Heart left ventricle (tissue), 16 donors: ENCODE measurements at regions of chr6 and their contacts with region 1.

Region 1: DNA sequence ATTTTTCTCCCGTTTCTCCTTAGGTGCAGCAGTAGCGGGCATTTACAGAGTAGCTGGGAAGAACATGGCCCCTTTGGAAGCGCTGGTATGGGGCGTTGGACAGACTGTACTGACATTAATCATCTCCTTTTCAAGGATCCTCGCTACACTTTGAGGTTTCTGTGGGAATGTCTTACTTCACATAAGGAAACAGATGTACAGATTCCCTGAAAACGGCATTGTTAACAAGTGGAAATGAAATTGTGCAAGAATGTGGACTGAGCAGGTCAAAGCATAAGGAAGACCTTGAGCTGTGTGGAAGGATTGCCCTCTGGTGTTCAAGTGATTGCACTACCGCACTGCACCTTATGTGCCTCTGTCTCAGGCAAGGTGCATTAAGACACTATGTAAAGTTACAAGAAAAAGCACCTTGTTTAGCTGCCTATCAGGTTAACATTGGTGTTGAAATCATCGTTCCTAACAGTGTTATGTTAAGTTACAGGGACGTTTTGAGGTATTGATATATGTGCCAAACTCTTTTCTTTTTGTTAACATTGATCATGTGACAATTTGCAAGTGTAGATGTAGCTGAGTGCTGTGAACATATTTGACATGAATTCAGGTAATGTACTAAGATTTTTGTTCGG is 38.0 kb downstream of the TMEM170B start:
- DNase-seq: peak in 4 of 5 donors; percentile 27 to 45 (median 39)
- ATAC-seq: peak; percentile 86 to 98 (median 96)
- H3K4me3 ChIP-seq: peak overlapping the region in 2 of 12 donors; percentile 5 to 10
- H3K27ac ChIP-seq: peak overlapping the region in 1 of 12 donors; percentile 24
- H3K4me1 ChIP-seq: peaks cover 0 to 8% (median 0%) of the 10 kb centered on the region in 12 donors
- H3K27me3 ChIP-seq: no peaks in the 10 kb centered on the region
- CTCF ChIP-seq: peak; percentile 75 to 91 (median 80)
- POLR2A ChIP-seq: no peak

Region 2: DNA sequence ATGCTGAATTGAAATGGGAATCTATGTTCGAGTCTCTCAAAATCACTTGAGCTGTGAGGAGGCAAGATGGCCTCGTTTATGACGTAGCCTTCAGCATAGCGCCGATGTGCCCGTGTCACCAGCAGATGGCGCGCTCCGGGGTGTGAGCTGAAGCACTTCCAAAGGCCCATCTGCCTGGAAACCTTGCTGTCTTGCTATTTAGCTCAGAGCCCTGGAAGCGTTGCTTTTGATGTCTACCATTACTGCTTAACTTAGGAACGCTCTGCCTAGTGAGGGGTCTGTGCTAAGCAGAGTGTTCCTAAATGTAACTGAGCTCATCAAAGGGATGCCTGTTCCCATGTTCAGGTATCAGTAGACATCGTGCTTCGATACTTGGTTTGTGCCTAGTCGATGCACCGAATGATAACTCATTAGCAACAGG is 620.9 kb before region 1 on chr6:
- intact Hi-C with region 1: loop called in 4 of 10 experiments (anchors 5 to 10 kb)
- DNase-seq: peak; percentile 59 to 84 (median 67)
- ATAC-seq: peak in 3 of 4 donors; percentile 68 to 72 (median 71)
- H3K4me3 ChIP-seq: no peak overlapping the region
- H3K27ac ChIP-seq: no peak overlapping the region
- H3K4me1 ChIP-seq: no peaks in the 10 kb centered on the region
- H3K27me3 ChIP-seq: no peaks in the 10 kb centered on the region
- CTCF ChIP-seq: peak; percentile 50 to 81 (median 68)
- POLR2A ChIP-seq: no peak

Region 3: GRCh38 chr6:11144393-11144851 is 431.1 kb before region 1 on chr6:
- intact Hi-C with region 1: loop called in 8 of 10 experiments (anchors 1 to 10 kb)
- DNase-seq: peak; percentile 72 to 83 (median 74)
- ATAC-seq: peak; percentile 89 to 96 (median 92)
- H3K4me3 ChIP-seq: no peak overlapping the region
- H3K27ac ChIP-seq: no peak overlapping the region
- H3K4me1 ChIP-seq: peaks cover 0 to 18% (median 0%) of the 10 kb centered on the region in 12 donors
- H3K27me3 ChIP-seq: no peaks in the 10 kb centered on the region
- CTCF ChIP-seq: peak; percentile 78 to 96 (median 90)
- POLR2A ChIP-seq: no peak

Region 4: GRCh38 chr6:11277275-11278206 is 298.0 kb before region 1 on chr6:
- intact Hi-C with region 1: no loop called
- DNase-seq: peak in 1 of 5 donors; percentile 48
- ATAC-seq: peak in 3 of 4 donors; percentile 23 to 79 (median 35)
- H3K4me3 ChIP-seq: no peak overlapping the region
- H3K27ac ChIP-seq: peak overlapping the region in 4 of 12 donors; percentile 50 to 60 (median 58)
- H3K4me1 ChIP-seq: peaks cover 0 to 37% (median 1%) of the 10 kb centered on the region in 12 donors
- H3K27me3 ChIP-seq: no peaks in the 10 kb centered on the region
- CTCF ChIP-seq: no peak
- POLR2A ChIP-seq: no peak